ENCODE measurements at regions of chr13 and their contacts with region 1.

Region 1: GRCh38 chr13:97242755-97243497 is 20.8 kb downstream of the MBNL2 start:
- DNase-seq: no peak
- H3K4me3 ChIP-seq: no peak overlapping the region
- H3K27ac ChIP-seq: no peak overlapping the region
- H3K4me1 ChIP-seq: no peaks in the 10 kb centered on the region
- H3K27me3 ChIP-seq: no peaks in the 10 kb centered on the region
- CTCF ChIP-seq: no peak
- POLR2A ChIP-seq: no peak

Region 2: DNA sequence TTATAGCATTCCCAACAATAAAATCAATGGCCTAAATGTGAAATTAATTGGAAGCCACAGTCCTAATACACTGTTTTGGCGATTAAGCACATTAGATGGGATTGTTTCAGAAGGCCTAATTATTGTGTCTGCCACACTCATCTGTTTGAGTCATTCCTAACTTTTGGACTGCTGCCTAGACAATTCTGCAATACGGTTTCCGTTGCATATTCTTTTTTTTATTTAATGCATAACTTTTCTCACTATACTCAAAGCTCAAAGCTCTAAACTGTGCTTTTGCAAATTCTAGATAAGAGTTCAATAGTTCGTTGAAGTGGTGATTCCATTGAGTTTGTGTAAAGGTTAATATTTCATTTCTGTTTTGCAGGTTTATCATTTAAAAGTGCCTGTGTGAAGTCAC is 32.3 kb after region 1 on chr13:
- intact Hi-C with region 1: loop called (anchors 5 kb)
- DNase-seq: no peak
- H3K4me3 ChIP-seq: no peak overlapping the region
- H3K27ac ChIP-seq: peak overlapping the region in 1 of 2 donors; percentile 29
- H3K4me1 ChIP-seq: peaks cover 9% of the 10 kb centered on the region
- H3K27me3 ChIP-seq: no peaks in the 10 kb centered on the region
- CTCF ChIP-seq: no peak
- POLR2A ChIP-seq: no peak

Region 3: GRCh38 chr13:97372936-97373335 is 130.0 kb after region 1 on chr13:
- intact Hi-C with region 1: no loop called
- DNase-seq: no peak
- H3K4me3 ChIP-seq: no peak overlapping the region
- H3K27ac ChIP-seq: no peak overlapping the region
- H3K4me1 ChIP-seq: no peaks in the 10 kb centered on the region
- H3K27me3 ChIP-seq: no peaks in the 10 kb centered on the region
- CTCF ChIP-seq: no peak
- POLR2A ChIP-seq: no peak

Region 4: DNA sequence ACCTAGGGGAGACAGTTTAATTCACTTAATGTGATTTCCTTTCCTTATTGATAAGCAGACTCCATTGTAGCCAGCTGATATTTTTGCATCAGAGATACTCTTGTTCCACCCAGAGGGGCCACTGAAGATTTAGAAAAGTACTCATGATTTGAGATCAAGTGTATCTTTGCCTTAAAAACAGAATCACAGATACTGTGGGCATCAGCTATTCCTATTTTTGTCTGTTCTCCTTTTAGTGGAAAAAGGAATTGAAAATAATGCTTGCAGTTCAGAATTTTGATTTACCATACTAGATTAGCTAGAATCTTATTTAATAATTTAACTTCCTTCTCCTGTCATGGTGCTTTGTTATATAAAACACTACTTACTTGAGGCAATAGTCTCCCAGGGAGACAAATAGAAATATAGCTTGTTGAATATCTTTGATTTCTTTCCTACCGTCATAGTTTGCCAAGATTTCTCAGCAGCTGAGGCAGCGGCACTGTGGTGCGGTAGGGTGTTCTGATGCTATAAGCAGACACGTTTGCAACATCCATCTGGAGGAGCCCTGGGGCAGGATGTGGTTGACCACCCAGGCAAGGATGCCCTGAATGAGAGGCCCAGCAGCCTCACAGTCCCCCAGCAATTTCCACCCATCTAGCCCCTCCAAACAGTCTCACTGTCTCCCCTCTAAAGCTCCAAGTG is 144.0 kb after region 1 on chr13:
- intact Hi-C with region 1: no loop called
- DNase-seq: no peak
- H3K4me3 ChIP-seq: no peak overlapping the region
- H3K27ac ChIP-seq: no peak overlapping the region
- H3K4me1 ChIP-seq: no peaks in the 10 kb centered on the region
- H3K27me3 ChIP-seq: no peaks in the 10 kb centered on the region
- CTCF ChIP-seq: no peak
- POLR2A ChIP-seq: no peak